Dorsolateral prefrontal cortex (tissue), 120 donors: ENCODE measurements at regions of chr10 and their contacts with region 1.

Region 1: GRCh38 chr10:24642622-24643417 is 80.9 kb downstream of the ARHGAP21 start:
- DNase-seq: no peak
- H3K4me3 ChIP-seq: no peak overlapping the region
- H3K27ac ChIP-seq: peak overlapping the region in 26 of 59 donors; percentile 1 to 65 (median 24)
- H3K27me3 ChIP-seq: no peaks in the 10 kb centered on the region
- CTCF ChIP-seq: peak; percentile 49 to 88 (median 75)

Region 2: GRCh38 chr10:24370877-24371795 is 271.7 kb before region 1 on chr10:
- intact Hi-C with region 1: no loop called
- DNase-seq: no peak
- H3K4me3 ChIP-seq: no peak overlapping the region
- H3K27ac ChIP-seq: no peak overlapping the region
- H3K27me3 ChIP-seq: peaks cover 0 to 3% (median 0%) of the 10 kb centered on the region in 45 donors
- CTCF ChIP-seq: no peak

Region 3: DNA sequence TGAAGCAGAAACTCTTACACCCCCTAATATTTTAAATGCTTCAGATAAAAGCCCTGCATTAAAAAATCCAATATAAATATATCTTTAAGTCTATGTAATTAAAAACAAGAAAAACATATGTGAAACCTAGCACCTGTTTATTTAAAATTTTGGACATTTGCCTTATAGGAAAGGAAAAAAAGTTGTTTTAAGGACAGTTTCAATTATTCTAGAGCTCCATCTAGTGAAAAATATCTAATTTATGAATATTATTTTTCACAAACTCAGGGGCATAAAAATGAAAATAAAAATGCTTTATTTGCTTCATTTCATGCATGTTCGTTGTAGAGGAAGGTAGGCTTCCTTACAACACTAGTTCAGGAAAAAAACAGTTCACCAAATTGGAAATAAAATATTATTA is 347.0 kb after region 1 on chr10:
- intact Hi-C with region 1: loop called in 1 of 2 experiments (anchors 5 kb)
- DNase-seq: no peak
- H3K4me3 ChIP-seq: no peak overlapping the region
- H3K27ac ChIP-seq: peak overlapping the region in 23 of 59 donors; percentile 1 to 79 (median 65)
- H3K27me3 ChIP-seq: no peaks in the 10 kb centered on the region
- CTCF ChIP-seq: peak in 54 of 56 donors; percentile 20 to 78 (median 54)

Region 4: GRCh38 chr10:25080880-25081581 is 438.2 kb after region 1 on chr10:
- intact Hi-C with region 1: loop called in 1 of 2 experiments (anchors 10 kb)
- DNase-seq: peak; percentile 63 to 90 (median 84)
- H3K4me3 ChIP-seq: peak overlapping the region in 10 of 59 donors; percentile 2 to 30 (median 18)
- H3K27ac ChIP-seq: peak overlapping the region in 28 of 59 donors; percentile 1 to 81 (median 42)
- H3K27me3 ChIP-seq: no peaks in the 10 kb centered on the region
- CTCF ChIP-seq: peak; percentile 81 to 99 (median 90)